CD14-positive monocyte (primary cell): ENCODE measurements at regions of chr9 and their contacts with region 1.

Region 1: DNA sequence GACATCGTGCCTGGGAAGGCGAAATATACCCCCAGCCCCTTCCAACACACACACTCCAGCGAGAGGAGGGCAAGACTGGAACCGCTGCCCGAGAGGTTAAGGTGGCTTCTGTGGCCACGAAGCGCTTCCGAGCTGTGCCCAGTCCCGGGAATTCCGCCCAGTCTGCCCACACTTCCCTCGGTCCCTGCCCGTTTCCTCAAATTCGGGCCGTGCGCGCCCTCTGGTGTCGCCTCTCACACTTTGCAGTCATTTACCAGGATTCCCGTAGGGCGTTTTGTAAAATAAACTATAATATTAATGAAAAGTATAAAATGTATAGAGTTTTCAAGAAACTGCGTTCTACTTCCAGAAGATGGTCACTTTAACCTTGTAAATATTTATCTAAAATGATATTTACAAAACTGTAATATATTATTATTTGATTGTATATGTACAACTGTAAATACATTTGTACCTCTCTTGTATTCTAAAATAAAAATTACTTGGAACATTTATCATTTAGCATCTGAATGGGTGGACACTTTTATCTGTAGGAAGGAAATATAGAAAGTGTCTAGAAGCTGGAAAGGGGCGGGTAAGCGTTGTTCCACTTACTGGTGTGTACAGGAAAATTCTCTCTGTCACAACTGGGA is 11.0 kb upstream of the EXOSC2 start:
- DNase-seq: peak; percentile 36 to 79 (median 61)
- H3K4me3 ChIP-seq: peak overlapping the region; percentile 31 to 81 (median 44)
- H3K4me3 Mint-ChIP-seq: peak overlapping the region; percentile 83 to 94
- H3K27ac ChIP-seq: no peak overlapping the region
- H3K27ac Mint-ChIP-seq: peak overlapping the region in 1 of 7 donors; percentile 38
- H3K4me1 ChIP-seq: peaks cover 13 to 16% of the 10 kb centered on the region in 2 donors
- H3K4me1 Mint-ChIP-seq: peaks cover 11% of the 10 kb centered on the region
- H3K27me3 ChIP-seq: peaks cover 2 to 28% of the 10 kb centered on the region in 2 donors
- H3K27me3 Mint-ChIP-seq: peaks cover 24 to 54% (median 32%) of the 10 kb centered on the region in 3 donors
- CTCF ChIP-seq: peak; percentile 95

Region 2: GRCh38 chr9:130461218-130461630 is 221.4 kb before region 1 on chr9:
- intact Hi-C with region 1: loop called (anchors 1 to 2 kb)
- DNase-seq: peak; percentile 22 to 53 (median 36)
- H3K4me3 ChIP-seq: no peak overlapping the region
- H3K4me3 Mint-ChIP-seq: no peak overlapping the region
- H3K27ac ChIP-seq: no peak overlapping the region
- H3K27ac Mint-ChIP-seq: no peak overlapping the region
- H3K4me1 ChIP-seq: no peaks in the 10 kb centered on the region
- H3K4me1 Mint-ChIP-seq: no peaks in the 10 kb centered on the region
- H3K27me3 ChIP-seq: peaks cover 0 to 9% of the 10 kb centered on the region in 2 donors
- H3K27me3 Mint-ChIP-seq: peaks cover 7 to 23% (median 23%) of the 10 kb centered on the region in 3 donors
- CTCF ChIP-seq: peak; percentile 98